Activated CD4-positive, alpha-beta T cell treated with anti-CD3 and anti-CD28 coated beads, Interleukin-2, amount 10 ng/mL, durations not matched to agents 24 days and 14 days (primary cell): ENCODE measurements at regions of chr2 and their contacts with region 1.

Region 1: DNA sequence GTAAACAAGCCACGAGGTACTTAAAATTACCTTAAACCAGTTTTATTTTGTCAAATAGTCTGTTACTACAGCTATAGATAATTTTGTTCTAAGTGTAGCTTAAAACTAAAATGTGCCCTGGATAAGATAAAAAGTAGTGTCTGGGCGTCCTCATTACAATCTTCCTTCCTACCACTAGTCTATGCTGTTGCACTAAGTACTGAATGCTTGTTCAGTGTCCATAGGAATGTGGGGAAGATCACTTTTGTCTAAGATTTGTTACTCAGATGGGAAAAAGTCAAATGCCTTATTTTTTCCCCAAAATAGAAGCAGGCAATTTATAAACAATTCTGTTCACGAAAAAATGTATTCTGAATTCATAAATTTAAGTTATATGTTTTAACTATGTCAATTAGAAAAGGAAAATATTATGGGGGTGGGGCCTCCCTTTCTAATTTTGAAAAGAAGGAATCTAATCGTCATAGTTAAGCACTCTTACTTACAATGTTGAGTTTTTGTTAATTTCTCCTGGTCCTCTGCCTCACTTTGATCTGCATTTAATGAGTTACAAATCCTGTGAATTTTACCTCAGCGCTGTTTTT is 140.4 kb upstream of the VRK2 start:
- DNase-seq: peak; percentile 58
- H3K4me3 Mint-ChIP-seq: no peak overlapping the region
- H3K27ac Mint-ChIP-seq: no peak overlapping the region
- H3K4me1 Mint-ChIP-seq: peaks cover 18% of the 10 kb centered on the region
- H3K27me3 Mint-ChIP-seq: peaks cover 2% of the 10 kb centered on the region

Region 2: GRCh38 chr2:57809230-57809629 is 97.0 kb before region 1 on chr2:
- intact Hi-C with region 1: no loop called
- DNase-seq: no peak
- H3K4me3 Mint-ChIP-seq: no peak overlapping the region
- H3K27ac Mint-ChIP-seq: no peak overlapping the region
- H3K4me1 Mint-ChIP-seq: no peaks in the 10 kb centered on the region
- H3K27me3 Mint-ChIP-seq: no peaks in the 10 kb centered on the region

Region 3: GRCh38 chr2:58120626-58121229 is 214.5 kb after region 1 on chr2:
- intact Hi-C with region 1: loop called (anchors 10 kb)
- DNase-seq: no peak
- H3K4me3 Mint-ChIP-seq: no peak overlapping the region
- H3K27ac Mint-ChIP-seq: no peak overlapping the region
- H3K4me1 Mint-ChIP-seq: no peaks in the 10 kb centered on the region
- H3K27me3 Mint-ChIP-seq: no peaks in the 10 kb centered on the region

Region 4: GRCh38 chr2:58448065-58448507 is 541.8 kb after region 1 on chr2:
- intact Hi-C with region 1: loop called (anchors 1 kb)
- DNase-seq: peak; percentile 72
- H3K4me3 Mint-ChIP-seq: no peak overlapping the region
- H3K27ac Mint-ChIP-seq: no peak overlapping the region
- H3K4me1 Mint-ChIP-seq: no peaks in the 10 kb centered on the region
- H3K27me3 Mint-ChIP-seq: peaks cover 7% of the 10 kb centered on the region

Region 5: GRCh38 chr2:58553937-58554336 is 647.7 kb after region 1 on chr2:
- intact Hi-C with region 1: loop called (anchors 10 kb)
- DNase-seq: no peak
- H3K4me3 Mint-ChIP-seq: no peak overlapping the region
- H3K27ac Mint-ChIP-seq: no peak overlapping the region
- H3K4me1 Mint-ChIP-seq: no peaks in the 10 kb centered on the region
- H3K27me3 Mint-ChIP-seq: peaks cover 7% of the 10 kb centered on the region